ENCODE measurements at regions of chrX and their contacts with region 1.

Region 1: GRCh38 chrX:109709129-109709631 is 23.9 kb downstream of the ACSL4 start:
- DNase-seq: peak in 1 of 2 experiments; percentile 7
- ATAC-seq: no peak
- H3K4me3 ChIP-seq: no peak overlapping the region
- H3K27ac ChIP-seq: peak overlapping the region; percentile 17 to 80; a peak in 4 of 6 replicates
- H3K4me1 ChIP-seq: peaks cover 23% of the 10 kb centered on the region
- CTCF ChIP-seq: no peak
- EP300 ChIP-seq: peak in 1 of 2 experiments; percentile 34; a peak in 1 of 5 replicates
- POLR2A ChIP-seq: no peak
- RAD21 ChIP-seq: no peak

Region 2: DNA sequence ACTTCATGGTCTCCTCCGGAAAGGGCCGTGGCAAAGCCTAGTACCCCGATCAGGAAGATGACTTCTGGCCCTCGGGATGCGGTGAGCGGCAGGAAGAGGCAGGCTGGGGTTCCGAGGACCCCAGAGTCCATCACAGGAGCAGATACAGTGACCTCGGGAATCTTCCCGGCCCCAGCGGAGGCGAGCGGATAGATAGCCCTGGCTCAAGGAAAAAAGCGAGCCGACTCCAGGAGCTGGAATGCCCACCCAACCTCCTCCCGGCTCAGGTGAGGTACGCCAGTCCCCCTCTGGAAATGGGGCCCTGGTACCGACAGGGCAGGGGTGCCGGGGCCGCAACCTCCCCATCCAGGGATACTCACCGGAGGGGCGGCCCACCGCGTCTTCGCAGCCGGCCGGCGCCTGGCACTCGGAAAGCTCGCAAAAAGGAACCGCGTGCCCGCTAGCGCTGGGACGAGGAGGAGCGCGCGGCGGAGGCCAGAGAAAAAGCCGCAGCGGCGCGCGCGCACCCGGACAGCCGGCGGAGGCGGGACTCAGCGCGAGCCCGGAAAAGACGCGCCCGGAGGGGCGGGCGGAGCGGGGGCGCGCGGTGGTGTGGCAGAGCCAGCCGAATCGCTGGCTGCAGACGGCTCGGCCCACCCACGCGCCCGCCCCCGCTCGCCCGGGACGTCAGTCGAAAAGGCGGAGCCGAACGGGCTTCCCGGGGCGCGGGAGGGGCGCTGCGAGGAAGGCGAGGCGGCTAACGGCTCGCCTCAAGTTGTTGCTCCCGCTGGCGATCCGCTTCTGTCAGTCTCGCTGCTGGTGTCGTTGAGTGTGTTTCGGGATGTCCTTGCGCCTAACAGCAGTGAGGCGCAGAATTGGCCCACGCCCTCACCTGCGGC is 23.8 kb after region 1 on chrX and contains the start of gene ACSL4:
- CTCF ChIA-PET with region 1: interaction called, 13 read pairs
- POLR2A ChIA-PET with region 1: interaction called, 3 read pairs
- DNase-seq: peak; percentile 65 to 79
- ATAC-seq: peak; percentile 96 to 99
- H3K4me3 ChIP-seq: peak within 1 kb of the TSS; percentile 80
- H3K27ac ChIP-seq: peak within 1 kb of the TSS; percentile 81 to 94
- H3K4me1 ChIP-seq: peaks cover 15% of the 10 kb centered on the region; the same call in 2 of the 3 replicates
- CTCF ChIP-seq: no peak
- EP300 ChIP-seq: no peak
- POLR2A ChIP-seq: no peak; the same call in 1 of the 2 replicates
- RAD21 ChIP-seq: no peak
- polyA plus RNA-seq, gene ACSL4: 20.8 and 31.6 TPM in 2 replicates

Region 3: GRCh38 chrX:109847257-109848187 is 138.3 kb after region 1 on chrX:
- CTCF ChIA-PET with region 1: interaction called, 15 read pairs
- POLR2A ChIA-PET with region 1: no interaction called
- DNase-seq: peak; percentile 6 to 62
- ATAC-seq: peak; percentile 91 to 93
- H3K4me3 ChIP-seq: no peak overlapping the region
- H3K27ac ChIP-seq: peak overlapping the region; percentile 60 to 80
- H3K4me1 ChIP-seq: peaks cover 34% of the 10 kb centered on the region
- CTCF ChIP-seq: no peak
- EP300 ChIP-seq: peak; percentile 31 to 75; a peak in 2 of 5 replicates
- POLR2A ChIP-seq: no peak
- RAD21 ChIP-seq: no peak; a peak in 1 of 5 replicates

Region 4: DNA sequence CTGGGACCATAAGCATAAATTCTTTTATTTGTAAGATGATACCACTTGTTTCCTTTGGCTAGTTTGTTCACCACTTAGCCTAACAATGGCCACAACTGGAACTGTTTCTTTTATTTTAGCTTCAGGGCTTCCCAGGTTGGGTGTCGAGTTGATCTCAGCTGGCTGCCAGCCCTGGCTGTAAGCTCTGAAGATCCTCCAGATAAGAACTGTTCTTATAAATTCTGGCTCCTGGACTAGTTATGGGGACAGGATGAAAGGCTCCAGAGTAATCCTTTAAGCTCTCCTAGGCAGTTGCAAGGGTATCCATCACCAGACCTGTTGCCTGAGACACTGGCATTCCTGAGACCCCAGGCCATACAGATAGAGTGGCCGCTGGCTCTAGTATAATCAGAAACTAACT is 153.3 kb after region 1 on chrX:
- CTCF ChIA-PET with region 1: interaction called, 147 read pairs
- POLR2A ChIA-PET with region 1: no interaction called
- DNase-seq: no peak
- ATAC-seq: no peak
- H3K4me3 ChIP-seq: no peak overlapping the region
- H3K27ac ChIP-seq: no peak overlapping the region
- H3K4me1 ChIP-seq: no peaks in the 10 kb centered on the region
- CTCF ChIP-seq: no peak
- EP300 ChIP-seq: no peak
- POLR2A ChIP-seq: no peak
- RAD21 ChIP-seq: no peak

Measured in A549 (cell line).